Transverse colon (tissue), 4 donors: ENCODE measurements at regions of chr7 and their contacts with region 1.

Region 1: GRCh38 chr7:154598396-154598795 is 404.5 kb downstream of the PAXIP1 start:
- DNase-seq: no peak
- H3K4me3 ChIP-seq: no peak overlapping the region
- H3K27ac ChIP-seq: no peak overlapping the region
- H3K4me1 ChIP-seq: no peaks in the 10 kb centered on the region
- H3K27me3 ChIP-seq: no peaks in the 10 kb centered on the region
- CTCF ChIP-seq: no peak
- EP300 ChIP-seq: no peak
- POLR2A ChIP-seq: no peak

Region 2: DNA sequence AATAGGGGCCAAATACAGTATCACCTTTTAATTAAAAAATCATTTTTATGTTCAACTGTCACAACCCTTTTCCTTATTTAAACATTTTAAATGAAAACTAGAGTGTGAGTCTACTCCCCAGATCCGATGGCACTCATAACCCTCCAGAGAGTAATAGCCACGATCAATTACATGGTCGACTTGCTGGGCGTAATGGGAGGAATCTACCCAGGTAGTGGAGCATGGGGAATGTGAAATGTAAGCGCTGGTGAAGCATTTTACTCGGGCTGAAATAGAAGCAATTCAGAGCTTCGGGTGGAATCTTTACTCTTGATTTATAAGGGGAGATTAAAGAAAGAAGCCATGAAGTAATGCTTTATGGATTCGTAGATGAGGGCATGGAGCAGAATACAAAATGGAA is 1516.9 kb before region 1 on chr7:
- in situ Hi-C with region 1: no loop called
- intact Hi-C with region 1: no loop called
- DNase-seq: no peak
- H3K4me3 ChIP-seq: no peak overlapping the region
- H3K27ac ChIP-seq: no peak overlapping the region
- H3K4me1 ChIP-seq: no peaks in the 10 kb centered on the region
- H3K27me3 ChIP-seq: no peaks in the 10 kb centered on the region
- CTCF ChIP-seq: no peak
- EP300 ChIP-seq: no peak
- POLR2A ChIP-seq: no peak

Region 3: GRCh38 chr7:153847828-153848227 is 750.6 kb before region 1 on chr7:
- in situ Hi-C with region 1: no loop called
- intact Hi-C with region 1: loop called (anchors 10 kb)
- DNase-seq: no peak
- H3K4me3 ChIP-seq: no peak overlapping the region
- H3K27ac ChIP-seq: no peak overlapping the region
- H3K4me1 ChIP-seq: no peaks in the 10 kb centered on the region
- H3K27me3 ChIP-seq: no peaks in the 10 kb centered on the region
- CTCF ChIP-seq: no peak
- EP300 ChIP-seq: no peak
- POLR2A ChIP-seq: no peak

Region 4: GRCh38 chr7:154178890-154179289 is 419.5 kb before region 1 on chr7:
- in situ Hi-C with region 1: no loop called
- intact Hi-C with region 1: no loop called
- DNase-seq: no peak
- H3K4me3 ChIP-seq: no peak overlapping the region
- H3K27ac ChIP-seq: no peak overlapping the region
- H3K4me1 ChIP-seq: no peaks in the 10 kb centered on the region
- H3K27me3 ChIP-seq: no peaks in the 10 kb centered on the region
- CTCF ChIP-seq: no peak
- EP300 ChIP-seq: no peak
- POLR2A ChIP-seq: no peak